ENCODE measurements at regions of chr20 and their contacts with region 1.

Region 1: GRCh38 chr20:58179432-58180099 is 48.9 kb downstream of the ANKRD60 start:
- DNase-seq: peak; percentile 59
- H3K4me3 ChIP-seq: peak overlapping the region in 2 of 4 donors; percentile 8 to 43
- H3K27ac ChIP-seq: no peak overlapping the region
- H3K4me1 ChIP-seq: peaks cover 0 to 14% (median 7%) of the 10 kb centered on the region in 4 donors
- H3K27me3 ChIP-seq: peaks cover 7% of the 10 kb centered on the region
- CTCF ChIP-seq: peak; percentile 81 to 100 (median 99)
- EP300 ChIP-seq: no peak
- POLR2A ChIP-seq: no peak

Region 2: GRCh38 chr20:57611586-57612311 is 567.8 kb before region 1 on chr20:
- in situ Hi-C with region 1: no loop called
- intact Hi-C with region 1: no loop called
- DNase-seq: peak; percentile 6
- H3K4me3 ChIP-seq: no peak overlapping the region
- H3K27ac ChIP-seq: no peak overlapping the region
- H3K4me1 ChIP-seq: no peaks in the 10 kb centered on the region
- H3K27me3 ChIP-seq: no peaks in the 10 kb centered on the region
- CTCF ChIP-seq: no peak
- EP300 ChIP-seq: no peak
- POLR2A ChIP-seq: no peak

Region 3: GRCh38 chr20:58054780-58055373 is 124.7 kb before region 1 on chr20:
- in situ Hi-C with region 1: loop called in 1 of 4 experiments (anchors 25 kb)
- intact Hi-C with region 1: no loop called
- DNase-seq: peak; percentile 14
- H3K4me3 ChIP-seq: no peak overlapping the region
- H3K27ac ChIP-seq: peak overlapping the region in 3 of 4 donors; percentile 22 to 41 (median 32)
- H3K4me1 ChIP-seq: peaks cover 0 to 5% (median 0%) of the 10 kb centered on the region in 4 donors
- H3K27me3 ChIP-seq: no peaks in the 10 kb centered on the region
- CTCF ChIP-seq: no peak
- EP300 ChIP-seq: no peak
- POLR2A ChIP-seq: no peak

Region 4: GRCh38 chr20:58081846-58082245 is 97.7 kb before region 1 on chr20:
- in situ Hi-C with region 1: no loop called
- intact Hi-C with region 1: no loop called
- DNase-seq: no peak
- H3K4me3 ChIP-seq: no peak overlapping the region
- H3K27ac ChIP-seq: no peak overlapping the region
- H3K4me1 ChIP-seq: peaks cover 0 to 7% (median 3%) of the 10 kb centered on the region in 4 donors
- H3K27me3 ChIP-seq: no peaks in the 10 kb centered on the region
- CTCF ChIP-seq: no peak
- EP300 ChIP-seq: no peak
- POLR2A ChIP-seq: no peak

Region 5: GRCh38 chr20:58246346-58246745 is 66.8 kb after region 1 on chr20:
- in situ Hi-C with region 1: no loop called
- intact Hi-C with region 1: no loop called
- DNase-seq: no peak
- H3K4me3 ChIP-seq: no peak overlapping the region
- H3K27ac ChIP-seq: no peak overlapping the region
- H3K4me1 ChIP-seq: no peaks in the 10 kb centered on the region
- H3K27me3 ChIP-seq: no peaks in the 10 kb centered on the region
- CTCF ChIP-seq: peak in 4 of 5 experiments; percentile 11 to 41 (median 27)
- EP300 ChIP-seq: no peak
- POLR2A ChIP-seq: no peak

Region 6: DNA sequence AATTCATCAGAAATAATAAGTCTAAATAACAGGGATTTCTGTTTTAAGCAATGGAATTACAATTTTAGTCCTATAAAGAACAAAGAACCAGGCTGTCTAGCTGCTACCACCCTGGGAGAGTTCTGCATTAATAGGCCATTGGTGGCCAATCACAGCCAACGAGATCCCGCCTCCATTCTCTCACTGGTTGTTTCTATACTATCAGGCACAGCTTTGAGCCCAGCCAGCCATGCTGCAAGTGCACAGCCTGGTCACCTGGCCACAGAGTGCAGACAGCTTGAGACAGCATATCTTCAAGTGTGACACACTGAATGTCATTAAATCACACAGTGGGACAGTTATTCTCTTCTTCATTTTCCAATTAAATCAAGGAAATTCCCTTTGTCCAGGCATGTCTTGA is 113.9 kb after region 1 on chr20:
- in situ Hi-C with region 1: no loop called
- intact Hi-C with region 1: no loop called
- DNase-seq: no peak
- H3K4me3 ChIP-seq: no peak overlapping the region
- H3K27ac ChIP-seq: no peak overlapping the region
- H3K4me1 ChIP-seq: no peaks in the 10 kb centered on the region
- H3K27me3 ChIP-seq: no peaks in the 10 kb centered on the region
- CTCF ChIP-seq: no peak
- EP300 ChIP-seq: no peak
- POLR2A ChIP-seq: no peak

Measured in transverse colon (tissue), 4 donors.